ENCODE measurements at regions of chr4 and their contacts with region 1.

Region 1: DNA sequence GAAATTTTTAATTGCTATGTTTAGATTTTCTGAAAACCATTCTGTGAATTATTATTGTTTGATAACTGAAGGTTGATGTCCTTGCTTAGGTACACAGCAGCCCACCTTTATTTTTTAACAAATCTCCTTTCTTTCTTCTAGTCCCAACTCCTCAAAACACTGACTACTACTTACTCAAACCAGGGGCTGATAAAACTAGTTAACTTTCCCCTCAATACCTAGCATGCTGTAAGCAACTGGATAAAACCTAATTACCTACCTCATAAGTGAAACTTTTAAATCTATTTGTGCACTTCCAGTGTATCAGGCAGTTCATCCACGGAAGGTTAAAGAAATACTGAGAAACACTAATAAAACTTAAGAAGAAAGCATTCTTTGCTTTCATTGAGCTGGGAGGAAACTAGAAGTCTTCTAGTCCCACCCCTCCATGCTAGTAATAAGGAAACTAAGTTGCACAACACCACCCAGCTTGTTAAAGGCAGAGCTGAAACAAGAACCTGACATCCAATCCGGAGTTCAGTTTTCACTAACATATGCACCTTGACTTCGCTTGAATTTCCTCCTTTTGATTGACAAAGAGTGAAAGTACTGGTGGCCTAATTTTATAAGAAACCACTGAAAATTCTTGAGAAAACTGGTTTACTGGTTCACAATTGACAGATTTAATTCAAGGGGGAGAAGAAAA is 180.2 kb upstream of the TET2 start:
- DNase-seq: peak; percentile 68 to 93 (median 86)
- H3K4me3 ChIP-seq: peak overlapping the region in 6 of 7 experiments; percentile 11 to 57 (median 33)
- H3K27ac ChIP-seq: peak overlapping the region; percentile 33 to 50
- H3K4me1 ChIP-seq: peaks cover 12 to 29% (median 14%) of the 10 kb centered on the region in 4 experiments
- H3K27me3 ChIP-seq: no peaks in the 10 kb centered on the region

Region 2: GRCh38 chr4:104942990-104943743 is 23.3 kb before region 1 on chr4:
- CTCF ChIA-PET with region 1: interaction called, 12 read pairs
- POLR2A ChIA-PET with region 1: no interaction called
- DNase-seq: peak; percentile 95 to 99 (median 97)
- H3K4me3 ChIP-seq: peak overlapping the region in 3 of 7 experiments; percentile 29 to 66 (median 52)
- H3K27ac ChIP-seq: peak overlapping the region; percentile 64 to 82
- H3K4me1 ChIP-seq: peaks cover 0 to 30% (median 2%) of the 10 kb centered on the region in 4 experiments
- H3K27me3 ChIP-seq: no peaks in the 10 kb centered on the region